ENCODE measurements at regions of chr5 and their contacts with region 1.

Region 1: DNA sequence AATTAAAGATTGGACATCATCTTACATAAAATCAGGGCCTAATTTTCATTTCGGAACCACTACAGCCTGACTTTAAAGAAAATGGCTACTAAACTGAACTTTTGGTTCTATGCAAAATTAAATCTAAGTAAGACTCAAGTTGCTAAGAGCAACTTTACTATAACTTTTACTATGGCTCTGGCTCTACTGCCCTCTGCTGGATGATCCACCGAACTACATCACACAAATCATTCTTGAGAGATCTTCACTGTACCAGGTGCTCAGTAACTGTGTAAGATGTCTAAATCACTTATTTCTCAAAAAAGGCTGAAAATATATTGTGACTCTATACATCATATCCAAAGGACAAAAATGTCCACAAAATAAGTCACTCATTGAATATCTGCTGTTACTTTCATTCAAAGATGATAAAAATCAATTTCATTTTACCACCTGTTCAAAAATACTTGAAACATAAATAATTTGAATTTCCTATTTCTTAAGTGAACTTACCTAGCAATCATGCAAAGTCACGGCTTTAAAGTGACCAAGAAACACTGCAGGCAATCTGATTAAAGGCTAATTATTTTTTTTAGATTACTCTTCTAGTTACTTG is 13.5 kb downstream of the MOCS2 start:
- DNase-seq: no peak

Region 2: DNA sequence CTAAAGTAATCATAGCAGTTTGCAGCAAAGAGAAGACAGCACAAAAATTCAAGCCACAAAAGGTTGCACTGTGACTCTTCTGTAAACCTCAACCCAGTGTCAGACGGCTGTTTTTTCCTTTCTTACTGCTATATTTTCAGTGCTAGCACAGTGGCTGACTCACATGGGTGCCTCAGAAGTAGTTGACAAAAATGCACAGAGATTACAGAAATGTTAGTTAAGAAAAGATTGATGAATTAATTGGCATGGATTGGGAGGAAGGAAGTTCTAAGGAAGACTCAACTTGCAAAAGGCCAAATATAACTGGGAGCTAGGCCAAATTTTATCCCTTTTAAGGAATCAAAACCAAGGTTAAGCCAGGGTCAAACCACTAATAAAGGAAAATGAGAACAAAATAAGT is 352.1 kb before region 1 on chr5:
- intact Hi-C with region 1: no loop called
- DNase-seq: no peak

Region 3: GRCh38 chr5:52948418-52949076 is 147.5 kb before region 1 on chr5:
- intact Hi-C with region 1: loop called (anchors 1 kb)
- DNase-seq: no peak

Region 4: DNA sequence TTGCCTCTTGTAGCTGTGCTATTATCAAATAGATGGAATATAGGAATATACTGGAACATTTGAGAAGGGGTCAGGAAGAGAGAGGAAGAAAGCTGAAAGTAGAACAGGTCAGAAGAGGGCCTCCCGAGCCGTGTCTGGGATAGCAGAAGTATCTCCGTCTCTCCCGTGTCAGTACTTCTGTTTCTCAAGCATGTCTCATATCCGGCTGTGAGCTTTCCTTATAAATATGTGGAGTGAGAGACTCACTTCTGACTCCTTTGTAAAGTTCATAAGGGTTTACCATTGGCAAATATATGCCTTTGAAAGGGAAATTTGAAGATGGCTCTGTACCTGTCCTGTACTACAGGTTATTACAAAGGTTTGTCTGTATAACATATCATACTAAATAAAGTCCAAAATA is 36.7 kb before region 1 on chr5:
- intact Hi-C with region 1: loop called (anchors 2 kb)
- DNase-seq: no peak

Measured in cardiac septum (tissue), 1 donor.